PC-3 (cell line): ENCODE measurements at regions of chr22 and their contacts with region 1.

Region 1: GRCh38 chr22:42437488-42438292 is 5.5 kb upstream of the NFAM1 start:
- DNase-seq: peak; percentile 69
- ATAC-seq: peak; percentile 87
- H3K4me3 ChIP-seq: peak overlapping the region; percentile 71
- H3K27ac ChIP-seq: no peak overlapping the region
- H3K4me1 ChIP-seq: peaks cover 6% of the 10 kb centered on the region; the same call in 1 of the 2 replicates
- H3K27me3 ChIP-seq: no peaks in the 10 kb centered on the region
- CTCF ChIP-seq: peak; percentile 92

Region 2: DNA sequence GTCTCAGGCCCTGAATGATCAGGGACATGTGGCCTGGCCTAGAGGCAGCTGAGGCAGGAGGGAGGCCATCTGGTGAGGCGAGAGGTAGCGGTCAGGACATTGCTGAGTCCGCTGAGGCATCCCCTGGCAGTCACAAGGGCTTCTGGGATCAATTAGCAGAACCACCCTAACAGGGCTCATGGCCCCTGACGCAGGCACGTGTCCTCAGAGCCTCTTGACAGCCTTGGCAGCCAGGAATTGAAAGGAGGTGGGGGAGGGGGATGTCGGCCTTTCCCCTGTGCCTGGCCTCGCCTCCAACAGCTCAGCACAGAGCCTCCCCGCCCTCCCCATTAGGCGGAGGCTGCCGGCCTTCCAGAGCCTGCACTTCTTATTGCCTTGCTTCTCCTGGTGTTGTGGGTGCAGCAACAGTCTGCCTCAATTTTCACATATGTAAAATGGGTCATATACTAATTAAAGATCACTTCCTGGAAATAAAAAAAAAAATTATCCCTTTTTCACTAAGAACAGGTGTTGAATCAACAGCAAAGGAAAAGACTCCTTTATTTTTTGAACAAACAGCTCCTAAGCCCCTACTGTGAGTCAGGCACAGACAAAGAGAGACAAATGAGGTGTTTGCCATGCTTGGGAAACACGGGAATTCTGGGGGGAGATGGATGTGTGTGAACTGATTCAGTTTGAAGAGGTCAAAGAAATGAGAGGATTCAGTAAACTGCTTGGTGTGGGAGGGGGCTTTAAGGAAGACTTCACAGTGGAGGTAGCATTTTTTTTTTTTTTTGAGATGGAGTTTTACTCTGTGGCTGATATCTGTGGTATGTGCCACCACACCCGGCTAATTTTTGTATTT is 60.8 kb before region 1 on chr22:
- CTCF ChIA-PET with region 1: no interaction called
- POLR2A ChIA-PET with region 1: no interaction called
- intact Hi-C with region 1: loop called (anchors 5 kb)
- DNase-seq: no peak
- ATAC-seq: no peak
- H3K4me3 ChIP-seq: no peak overlapping the region
- H3K27ac ChIP-seq: no peak overlapping the region
- H3K4me1 ChIP-seq: no peaks in the 10 kb centered on the region
- H3K27me3 ChIP-seq: no peaks in the 10 kb centered on the region
- CTCF ChIP-seq: no peak